H1 (cell line): ENCODE measurements at regions of chr1 and their contacts with region 1.

Region 1: DNA sequence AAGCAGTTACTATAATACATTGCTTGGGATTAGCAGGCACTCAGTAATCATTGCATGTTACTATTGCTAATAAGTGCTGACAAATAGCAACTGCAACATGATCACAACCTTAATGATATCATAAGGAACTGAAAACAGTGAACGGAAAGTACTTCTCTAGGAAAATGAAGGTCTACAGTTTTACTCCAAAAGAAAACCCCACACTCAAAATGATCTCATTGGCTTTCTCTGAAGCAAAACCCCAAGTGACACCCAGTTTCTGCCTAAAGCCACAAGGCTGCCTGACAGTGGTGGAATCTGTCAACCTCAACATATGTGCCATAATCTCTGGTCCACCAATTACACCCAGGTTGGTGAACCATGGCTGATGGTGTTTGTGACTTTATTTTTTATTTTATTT is 137.6 kb downstream of the PTGER3 start:
- DNase-seq: no peak
- H3K4me3 ChIP-seq: no peak overlapping the region
- H3K27ac ChIP-seq: no peak overlapping the region
- H3K4me1 ChIP-seq: no peaks in the 10 kb centered on the region
- H3K27me3 ChIP-seq: no peaks in the 10 kb centered on the region
- CTCF ChIP-seq: no peak
- EP300 ChIP-seq: no peak
- POLR2A ChIP-seq: no peak
- RAD21 ChIP-seq: no peak

Region 2: DNA sequence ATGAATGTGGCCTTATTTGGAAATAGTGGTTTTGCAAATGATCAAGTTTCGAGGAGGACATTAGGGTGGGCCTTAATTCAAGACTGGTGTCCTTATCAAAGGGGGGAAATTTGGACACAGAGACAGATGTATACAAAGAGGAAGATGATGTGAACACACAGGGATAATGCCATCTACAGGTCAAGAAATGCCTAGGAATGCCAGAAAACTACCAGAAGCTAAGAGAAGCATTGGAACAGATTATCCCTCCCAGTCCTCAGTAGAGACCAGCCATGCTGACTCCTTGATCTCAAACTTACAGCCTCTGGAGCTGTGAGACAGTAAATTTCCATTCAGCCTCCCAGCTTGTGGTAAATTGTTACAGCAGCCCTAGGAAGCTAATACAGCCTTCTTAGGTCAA is 13.8 kb before region 1 on chr1:
- CTCF ChIA-PET with region 1: interaction called, 23 read pairs
- POLR2A ChIA-PET with region 1: no interaction called
- DNase-seq: no peak
- H3K4me3 ChIP-seq: no peak overlapping the region
- H3K27ac ChIP-seq: no peak overlapping the region
- H3K4me1 ChIP-seq: peaks cover 0 to 2% (median 0%) of the 10 kb centered on the region in 4 experiments; a peak in 1 of 7 replicates
- H3K27me3 ChIP-seq: no peaks in the 10 kb centered on the region
- CTCF ChIP-seq: peak in 2 of 3 experiments; percentile 18 to 26; a peak in 2 of 4 replicates
- EP300 ChIP-seq: no peak
- POLR2A ChIP-seq: no peak
- RAD21 ChIP-seq: peak; percentile 36 to 40; a peak in 3 of 4 replicates